Left cardiac atrium (tissue), 4 donors: ENCODE measurements at regions of chr22 and their contacts with region 1.

Region 1: GRCh38 chr22:37199103-37199759 is 11.2 kb upstream of the C1QTNF6 start:
- DNase-seq: peak; percentile 99
- ATAC-seq: peak; percentile 92 to 93

Region 2: GRCh38 chr22:37077884-37078485 is 121.2 kb before region 1 on chr22:
- intact Hi-C with region 1: loop called (anchors 1 to 10 kb)
- DNase-seq: peak; percentile 55
- ATAC-seq: peak in 1 of 2 donors; percentile 57

Region 3: DNA sequence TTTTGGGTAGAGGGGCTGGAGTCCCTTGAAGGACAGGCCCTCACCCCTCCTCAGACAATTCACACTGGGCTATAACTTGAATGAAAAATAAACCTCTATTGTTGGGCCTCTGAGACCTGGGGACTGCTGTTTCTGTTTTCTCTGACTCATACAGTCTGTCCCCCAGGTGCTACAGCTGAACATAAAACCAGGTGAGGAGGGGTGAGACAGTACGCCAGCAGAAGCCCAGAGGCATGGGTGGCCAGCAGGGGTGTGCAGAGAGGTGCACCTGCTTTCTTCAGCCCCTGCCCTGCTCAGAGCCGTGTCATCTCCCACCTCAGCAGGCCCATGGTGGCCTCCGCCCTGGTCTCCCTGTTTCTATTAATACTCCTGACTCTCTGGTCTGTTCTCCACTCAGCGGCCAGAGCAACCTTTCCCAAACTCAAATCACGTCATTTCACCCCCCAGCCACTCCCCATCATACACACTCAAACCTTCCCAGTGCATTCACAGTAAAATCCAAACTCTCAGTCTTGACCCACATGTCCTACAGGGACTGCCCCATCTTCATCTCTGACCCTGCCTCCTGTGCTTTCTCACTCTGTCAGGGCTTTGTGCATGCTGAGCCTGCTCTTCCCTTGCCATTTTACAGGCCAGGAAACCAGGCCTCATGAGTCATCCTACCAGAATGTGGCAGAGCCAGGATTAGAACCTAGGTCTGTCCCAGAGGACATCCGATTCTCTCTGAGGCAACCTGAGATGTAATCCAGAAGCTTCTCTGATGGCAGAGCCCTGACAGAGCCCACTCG is 44.1 kb before region 1 on chr22:
- intact Hi-C with region 1: loop called in 1 of 2 experiments (anchors 5 kb)
- DNase-seq: no peak
- ATAC-seq: no peak

Region 4: DNA sequence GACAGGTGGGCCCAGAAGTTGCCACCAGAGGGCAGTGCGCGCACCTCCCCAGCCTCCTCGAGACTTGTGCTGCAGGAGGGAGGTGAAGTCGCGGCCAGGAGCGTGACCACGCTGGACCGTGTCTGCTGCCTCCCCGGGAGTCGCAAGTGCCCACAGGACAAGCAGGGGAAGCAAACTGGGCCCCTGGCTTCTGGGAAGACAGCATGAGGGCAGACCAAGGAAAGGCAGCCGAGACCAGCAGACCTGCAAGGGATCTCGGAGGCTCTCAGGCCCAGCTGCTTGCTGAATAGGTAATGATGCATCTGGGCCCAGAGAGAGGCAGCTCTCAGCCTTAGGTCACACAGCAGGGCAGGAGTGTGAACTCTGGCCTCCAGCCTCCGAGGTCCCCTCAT is 32.6 kb before region 1 on chr22:
- intact Hi-C with region 1: loop called in 1 of 2 experiments (anchors 1 kb)
- DNase-seq: peak; percentile 89
- ATAC-seq: peak; percentile 92